ENCODE measurements at regions of chr7 and their contacts with region 1.

Region 1: GRCh38 chr7:151028131-151028947 is at the start of gene ABCB8:
- DNase-seq: peak; percentile 99 to 100
- H3K4me3 ChIP-seq: peak within 1 kb of the TSS; percentile 59
- H3K27ac ChIP-seq: peak within 1 kb of the TSS; percentile 59
- H3K4me1 ChIP-seq: peaks cover 55% of the 10 kb centered on the region
- H3K27me3 ChIP-seq: no peaks in the 10 kb centered on the region
- CTCF ChIP-seq: peak; percentile 73; the same call in 1 of the 2 replicates
- total RNA-seq, gene ABCB8: 51.8 and 61.9 TPM in 2 replicates

Region 2: DNA sequence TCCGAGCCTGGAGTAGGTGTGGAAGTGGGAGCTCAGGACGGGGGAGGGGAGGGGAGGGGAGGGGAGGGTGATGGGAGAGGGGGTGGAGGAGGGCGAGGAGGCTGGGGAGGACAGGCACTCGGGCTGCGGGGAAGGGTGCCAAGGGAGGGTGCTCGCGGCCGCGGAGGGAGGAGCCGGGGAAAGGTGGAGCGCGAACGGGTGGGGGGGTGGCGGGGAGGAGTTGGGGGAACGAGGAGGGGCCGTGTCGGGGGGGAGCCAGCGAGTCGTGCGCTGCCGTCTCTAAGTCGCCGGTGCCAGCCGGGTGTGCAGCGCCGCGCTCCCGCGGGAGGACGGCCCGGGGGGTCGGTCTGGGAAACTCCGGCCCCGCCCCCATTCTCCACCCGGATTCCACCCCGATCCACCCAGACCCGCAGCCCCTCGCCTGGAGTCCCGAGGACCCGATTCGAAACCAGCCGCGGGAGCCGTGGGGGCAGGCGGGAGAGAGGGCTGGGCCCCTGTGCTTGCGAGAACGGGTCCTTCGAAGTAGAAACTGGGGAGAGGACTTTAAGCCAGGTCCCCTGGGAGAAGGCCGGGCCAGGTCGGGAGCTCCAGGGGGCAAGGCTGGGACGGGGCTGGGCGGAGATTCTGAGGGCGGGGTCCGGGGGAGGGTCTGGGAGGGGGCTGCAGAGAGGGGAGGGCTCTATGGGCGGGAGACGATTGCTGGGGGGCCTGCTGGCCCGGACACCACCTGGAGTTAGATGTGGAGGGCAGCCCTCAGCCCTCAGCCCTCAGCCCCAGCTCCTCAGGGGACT is 1254.7 kb before region 1 on chr7 and contains the start of gene ZNF467:
- CTCF ChIA-PET with region 1: no interaction called
- POLR2A ChIA-PET with region 1: interaction called, 13 read pairs
- intact Hi-C with region 1: no loop called
- DNase-seq: peak in 1 of 2 experiments; percentile 47
- H3K4me3 ChIP-seq: peak within 1 kb of the TSS; percentile 88
- H3K27ac ChIP-seq: no peak within 1 kb of the TSS
- H3K4me1 ChIP-seq: no peaks in the 10 kb centered on the region
- H3K27me3 ChIP-seq: peaks cover 36% of the 10 kb centered on the region
- CTCF ChIP-seq: no peak
- total RNA-seq, gene ZNF467: 6.6 and 10.3 TPM in 2 replicates

Region 3: GRCh38 chr7:150778738-150779301 is 249.5 kb before region 1 on chr7:
- CTCF ChIA-PET with region 1: interaction called, 14 read pairs
- POLR2A ChIA-PET with region 1: interaction called, 18 read pairs
- intact Hi-C with region 1: no loop called
- DNase-seq: peak; percentile 50 to 77
- H3K4me3 ChIP-seq: no peak overlapping the region
- H3K27ac ChIP-seq: no peak overlapping the region
- H3K4me1 ChIP-seq: no peaks in the 10 kb centered on the region
- H3K27me3 ChIP-seq: peaks cover 43% of the 10 kb centered on the region
- CTCF ChIP-seq: peak; percentile 91

Region 4: GRCh38 chr7:150903606-150904005 is 124.7 kb before region 1 on chr7:
- CTCF ChIA-PET with region 1: interaction called, 8 read pairs
- POLR2A ChIA-PET with region 1: no interaction called
- intact Hi-C with region 1: loop called (anchors 5 kb)
- DNase-seq: peak; percentile 64 to 93
- H3K4me3 ChIP-seq: no peak overlapping the region
- H3K27ac ChIP-seq: no peak overlapping the region
- H3K4me1 ChIP-seq: no peaks in the 10 kb centered on the region
- H3K27me3 ChIP-seq: peaks cover 52% of the 10 kb centered on the region
- CTCF ChIP-seq: no peak

Region 5: DNA sequence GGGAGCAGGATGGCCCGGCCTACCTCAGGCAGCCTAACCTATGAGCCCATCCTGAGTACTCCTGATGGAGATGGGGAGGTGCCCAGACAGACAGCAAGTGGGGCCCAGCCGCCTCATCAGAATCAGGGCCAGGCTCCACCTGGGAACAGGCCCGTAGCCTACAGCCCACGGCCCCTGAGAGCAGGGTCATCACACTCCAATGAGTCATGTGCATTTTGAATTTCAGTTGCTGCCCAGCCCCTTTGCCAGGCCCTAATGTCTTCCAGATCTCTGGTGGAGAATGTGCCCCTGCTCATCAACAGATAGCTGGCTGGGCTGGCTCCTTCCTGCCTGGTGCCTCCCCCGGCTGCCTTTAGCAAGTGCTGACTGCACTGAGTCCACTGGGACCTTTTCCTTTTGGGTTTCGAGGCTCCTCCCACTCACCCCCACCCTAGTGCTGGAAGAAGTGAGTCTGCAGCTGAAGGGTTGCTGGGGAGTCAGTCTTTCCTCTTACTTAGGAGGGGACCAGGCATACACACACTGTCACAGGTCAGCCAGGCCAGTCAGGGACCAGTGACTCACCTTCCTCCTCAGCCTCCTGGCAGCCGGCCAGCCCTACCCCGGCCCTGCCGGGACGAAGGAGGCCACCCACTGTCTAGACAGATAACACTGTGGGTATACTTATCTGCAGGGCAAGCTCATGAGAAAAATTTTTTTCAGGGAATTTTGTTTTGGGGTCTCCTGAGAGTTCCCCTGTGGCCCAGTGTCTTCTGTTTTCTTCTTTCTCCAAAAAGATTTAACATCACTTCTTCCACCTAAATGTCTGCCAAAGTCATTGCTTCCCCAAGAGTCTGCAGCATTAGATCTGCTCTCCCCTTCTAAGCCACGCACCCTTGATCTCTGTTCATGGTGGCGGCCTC is 10.9 kb after region 1 on chr7:
- CTCF ChIA-PET with region 1: no interaction called
- POLR2A ChIA-PET with region 1: interaction called, 5 read pairs
- intact Hi-C with region 1: loop called (anchors 1 kb)
- DNase-seq: peak; percentile 86 to 95
- H3K4me3 ChIP-seq: no peak overlapping the region; the same call in 1 of the 2 replicates
- H3K27ac ChIP-seq: peak overlapping the region; percentile 72
- H3K4me1 ChIP-seq: peaks cover 26% of the 10 kb centered on the region
- H3K27me3 ChIP-seq: no peaks in the 10 kb centered on the region
- CTCF ChIP-seq: no peak

Region 6: GRCh38 chr7:151080522-151081169 is 52.3 kb after region 1 on chr7 and contains the start of gene FASTK:
- CTCF ChIA-PET with region 1: interaction called, 3 read pairs
- POLR2A ChIA-PET with region 1: interaction called, 13 read pairs
- intact Hi-C with region 1: no loop called
- DNase-seq: peak; percentile 82 to 93
- H3K4me3 ChIP-seq: peak within 1 kb of the TSS; percentile 89
- H3K27ac ChIP-seq: peak within 1 kb of the TSS; percentile 70
- H3K4me1 ChIP-seq: peaks cover 35% of the 10 kb centered on the region
- H3K27me3 ChIP-seq: no peaks in the 10 kb centered on the region
- CTCF ChIP-seq: no peak
- total RNA-seq, gene FASTK: 104 and 126 TPM in 2 replicates

Region 7: DNA sequence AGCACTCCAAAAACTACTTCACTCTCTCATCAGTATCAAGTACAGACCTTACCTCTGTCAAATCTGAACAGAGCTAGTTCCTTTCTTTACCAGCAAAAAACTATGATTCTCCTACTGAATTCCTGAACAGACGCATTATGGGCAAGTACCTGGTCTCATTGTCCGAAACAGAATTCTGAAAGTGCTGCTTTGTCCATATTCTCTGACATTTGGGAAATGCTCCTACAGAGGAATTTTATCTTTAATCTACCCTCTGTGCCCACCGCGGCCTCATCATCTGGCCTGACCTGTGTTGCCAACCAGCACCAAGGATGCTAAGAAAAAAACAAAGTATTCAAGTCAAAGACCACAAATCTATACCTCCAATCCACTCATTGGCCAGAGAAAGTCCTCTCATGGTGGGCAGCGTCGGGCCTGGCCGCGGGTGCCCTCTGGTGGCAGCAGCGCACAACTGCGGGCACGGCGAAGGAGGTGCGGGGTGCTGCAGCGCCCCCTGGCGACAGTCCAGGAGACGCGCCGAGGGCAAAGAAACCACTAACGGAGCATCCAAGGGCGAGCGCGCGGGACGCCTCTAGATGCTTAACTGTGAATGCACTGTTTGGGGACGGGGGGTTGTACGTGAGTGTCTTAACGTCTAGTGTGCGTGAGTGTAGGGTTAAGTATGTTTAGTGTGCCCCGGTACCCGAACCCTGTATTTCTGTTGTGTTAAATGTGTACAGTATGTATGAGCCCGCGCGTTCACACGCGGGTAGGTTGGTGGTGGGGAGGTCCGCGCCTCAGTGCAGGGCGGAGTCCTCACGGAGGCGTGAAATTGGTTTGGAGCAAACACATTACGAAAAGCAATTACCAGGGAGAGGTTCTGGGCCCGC is 144.2 kb after region 1 on chr7:
- CTCF ChIA-PET with region 1: interaction called, 3 read pairs
- POLR2A ChIA-PET with region 1: no interaction called
- intact Hi-C with region 1: loop called (anchors 5 kb)
- DNase-seq: peak; percentile 46 to 82
- H3K4me3 ChIP-seq: no peak overlapping the region
- H3K27ac ChIP-seq: no peak overlapping the region
- H3K4me1 ChIP-seq: no peaks in the 10 kb centered on the region
- H3K27me3 ChIP-seq: peaks cover 61% of the 10 kb centered on the region
- CTCF ChIP-seq: peak; percentile 100